Dendritic cell treated with granulocyte-macrophage colony-stimulating factor and Interleukin-4, amounts not matched to agents 40 ng/mL and 50 ng/mL, for 4 days (primary cell): ENCODE measurements at regions of chr3 and their contacts with region 1.

Region 1: GRCh38 chr3:24773798-24774197 is 279.1 kb upstream of the THRB start:
- H3K4me3 Mint-ChIP-seq: no peak overlapping the region
- H3K27ac Mint-ChIP-seq: no peak overlapping the region
- H3K4me1 Mint-ChIP-seq: no peaks in the 10 kb centered on the region
- H3K27me3 Mint-ChIP-seq: no peaks in the 10 kb centered on the region

Region 2: DNA sequence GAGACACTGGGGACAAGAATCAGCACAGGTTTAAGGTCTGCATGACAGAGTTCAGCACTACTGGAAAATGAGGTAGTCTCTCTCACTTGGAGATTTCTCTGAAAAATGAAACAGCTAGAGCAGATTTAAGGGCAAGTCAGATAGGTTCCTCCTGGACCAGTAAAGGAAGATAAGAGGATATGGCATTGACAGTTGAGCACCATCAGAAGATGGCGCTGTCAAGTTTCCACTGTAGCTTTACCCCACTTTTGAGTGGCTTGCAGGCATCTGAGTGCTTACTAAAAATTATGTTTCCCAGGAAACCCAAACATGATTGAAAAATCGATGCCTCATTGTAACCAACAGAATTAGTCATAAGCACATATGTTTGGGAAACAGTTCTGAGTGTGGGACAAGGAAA is 1977.9 kb before region 1 on chr3:
- intact Hi-C with region 1: no loop called
- H3K4me3 Mint-ChIP-seq: no peak overlapping the region
- H3K27ac Mint-ChIP-seq: no peak overlapping the region
- H3K4me1 Mint-ChIP-seq: no peaks in the 10 kb centered on the region
- H3K27me3 Mint-ChIP-seq: no peaks in the 10 kb centered on the region

Region 3: GRCh38 chr3:25033407-25034029 is 259.7 kb after region 1 on chr3:
- intact Hi-C with region 1: loop called (anchors 5 kb)
- H3K4me3 Mint-ChIP-seq: no peak overlapping the region
- H3K27ac Mint-ChIP-seq: no peak overlapping the region
- H3K4me1 Mint-ChIP-seq: no peaks in the 10 kb centered on the region
- H3K27me3 Mint-ChIP-seq: no peaks in the 10 kb centered on the region

Region 4: DNA sequence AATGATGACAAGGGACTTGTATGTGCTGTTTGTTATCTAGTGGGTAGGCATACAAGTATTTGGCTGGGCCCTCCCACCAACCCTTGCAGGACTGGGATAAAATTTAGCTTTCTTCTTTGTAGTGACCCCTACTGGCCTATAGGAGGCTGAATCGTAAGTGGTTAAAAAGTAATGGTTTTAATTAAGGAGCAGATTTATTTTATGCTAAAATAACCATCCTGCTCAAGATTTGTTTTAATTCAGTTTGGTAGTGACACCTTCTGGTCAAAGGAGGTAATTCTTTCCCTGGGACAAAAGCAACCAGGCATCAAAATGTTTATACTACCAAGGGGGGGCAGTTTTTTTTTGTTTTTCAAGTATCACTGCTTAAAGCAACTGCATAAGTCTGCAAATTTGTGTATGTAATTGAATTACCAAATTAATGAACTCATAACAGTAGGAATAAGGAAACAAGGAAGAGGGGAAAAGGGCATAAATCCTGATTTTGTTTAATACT is 820.3 kb after region 1 on chr3:
- intact Hi-C with region 1: loop called (anchors 5 kb)
- H3K4me3 Mint-ChIP-seq: no peak overlapping the region
- H3K27ac Mint-ChIP-seq: no peak overlapping the region
- H3K4me1 Mint-ChIP-seq: peaks cover 7% of the 10 kb centered on the region
- H3K27me3 Mint-ChIP-seq: no peaks in the 10 kb centered on the region

Region 5: GRCh38 chr3:26712211-26713026 is 1938.6 kb after region 1 on chr3:
- intact Hi-C with region 1: loop called (anchors 5 kb)
- H3K4me3 Mint-ChIP-seq: no peak overlapping the region
- H3K27ac Mint-ChIP-seq: no peak overlapping the region
- H3K4me1 Mint-ChIP-seq: no peaks in the 10 kb centered on the region
- H3K27me3 Mint-ChIP-seq: no peaks in the 10 kb centered on the region